ENCODE measurements at regions of chr5 and their contacts with region 1.

Region 1: GRCh38 chr5:51829691-51830090 is 446.4 kb downstream of the ISL1 start:
- DNase-seq: peak; percentile 43
- H3K4me3 ChIP-seq: no peak overlapping the region
- H3K27ac ChIP-seq: peak overlapping the region; percentile 39
- H3K4me1 ChIP-seq: peaks cover 28% of the 10 kb centered on the region
- H3K27me3 ChIP-seq: no peaks in the 10 kb centered on the region
- CTCF ChIP-seq: no peak

Region 2: DNA sequence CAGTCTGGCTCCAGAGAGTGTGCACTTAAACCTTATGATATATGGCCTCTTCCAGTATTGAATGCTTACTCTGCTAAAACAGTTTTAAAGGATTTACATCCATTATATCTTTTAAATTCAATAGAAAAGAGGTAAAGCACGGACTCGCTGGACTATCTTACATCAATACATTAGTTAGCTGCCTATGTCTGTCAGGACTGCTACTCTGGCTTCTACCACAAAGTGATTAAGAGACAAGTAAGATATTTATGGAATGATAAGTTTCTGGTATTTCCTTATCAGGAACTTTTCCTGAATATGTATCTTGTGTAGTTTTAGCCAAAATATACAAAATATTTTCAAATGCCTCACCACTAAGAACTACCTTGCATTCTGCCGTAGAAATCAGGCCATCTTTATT is 151.4 kb before region 1 on chr5:
- CTCF ChIA-PET with region 1: no interaction called
- dilution Hi-C with region 1: no loop called
- in situ Hi-C with region 1: no loop called
- intact Hi-C with region 1: no loop called
- DNase-seq: no peak
- H3K4me3 ChIP-seq: no peak overlapping the region
- H3K27ac ChIP-seq: no peak overlapping the region
- H3K4me1 ChIP-seq: no peaks in the 10 kb centered on the region
- H3K27me3 ChIP-seq: no peaks in the 10 kb centered on the region
- CTCF ChIP-seq: no peak

Region 3: GRCh38 chr5:51810592-51810991 is 19.1 kb before region 1 on chr5:
- CTCF ChIA-PET with region 1: no interaction called
- dilution Hi-C with region 1: no loop called
- in situ Hi-C with region 1: no loop called
- intact Hi-C with region 1: loop called (anchors 1 kb)
- DNase-seq: peak; percentile 94
- H3K4me3 ChIP-seq: no peak overlapping the region
- H3K27ac ChIP-seq: peak overlapping the region; percentile 95
- H3K4me1 ChIP-seq: peaks cover 40% of the 10 kb centered on the region
- H3K27me3 ChIP-seq: no peaks in the 10 kb centered on the region
- CTCF ChIP-seq: no peak

Region 4: GRCh38 chr5:51816427-51816826 is 13.3 kb before region 1 on chr5:
- CTCF ChIA-PET with region 1: no interaction called
- dilution Hi-C with region 1: no loop called
- in situ Hi-C with region 1: no loop called
- intact Hi-C with region 1: loop called (anchors 1 kb)
- DNase-seq: peak; percentile 53
- H3K4me3 ChIP-seq: no peak overlapping the region
- H3K27ac ChIP-seq: no peak overlapping the region
- H3K4me1 ChIP-seq: peaks cover 30% of the 10 kb centered on the region
- H3K27me3 ChIP-seq: no peaks in the 10 kb centered on the region
- CTCF ChIP-seq: no peak

Region 5: GRCh38 chr5:51881901-51882300 is 52.2 kb after region 1 on chr5:
- CTCF ChIA-PET with region 1: no interaction called
- dilution Hi-C with region 1: no loop called
- in situ Hi-C with region 1: no loop called
- intact Hi-C with region 1: no loop called
- DNase-seq: no peak
- H3K4me3 ChIP-seq: no peak overlapping the region
- H3K27ac ChIP-seq: no peak overlapping the region
- H3K4me1 ChIP-seq: no peaks in the 10 kb centered on the region
- H3K27me3 ChIP-seq: no peaks in the 10 kb centered on the region
- CTCF ChIP-seq: no peak

Region 6: DNA sequence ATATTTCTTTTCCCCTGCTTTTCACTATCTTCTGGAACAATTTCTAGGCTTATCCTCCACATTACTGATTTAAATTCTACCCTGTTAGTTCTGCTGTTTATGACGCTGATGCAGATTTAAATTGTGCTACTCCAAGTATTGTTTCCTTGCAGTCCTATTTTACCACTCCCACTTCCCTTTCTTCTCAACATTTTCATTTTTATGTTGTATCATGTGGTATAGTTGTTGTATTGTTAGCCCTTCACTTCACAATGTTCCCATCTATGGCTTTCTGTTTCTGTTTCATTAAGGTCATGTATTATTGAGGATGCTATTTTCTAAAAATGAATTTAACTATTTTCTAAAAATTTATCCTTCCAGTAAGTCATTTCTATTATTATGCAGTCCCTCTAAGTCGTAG is 1985.1 kb after region 1 on chr5:
- CTCF ChIA-PET with region 1: no interaction called
- dilution Hi-C with region 1: no loop called
- in situ Hi-C with region 1: no loop called
- intact Hi-C with region 1: no loop called
- DNase-seq: no peak
- H3K4me3 ChIP-seq: no peak overlapping the region
- H3K27ac ChIP-seq: no peak overlapping the region
- H3K4me1 ChIP-seq: no peaks in the 10 kb centered on the region
- H3K27me3 ChIP-seq: peaks cover 4% of the 10 kb centered on the region
- CTCF ChIP-seq: no peak